ENCODE measurements at regions of chr6 and their contacts with region 1.

Region 1: DNA sequence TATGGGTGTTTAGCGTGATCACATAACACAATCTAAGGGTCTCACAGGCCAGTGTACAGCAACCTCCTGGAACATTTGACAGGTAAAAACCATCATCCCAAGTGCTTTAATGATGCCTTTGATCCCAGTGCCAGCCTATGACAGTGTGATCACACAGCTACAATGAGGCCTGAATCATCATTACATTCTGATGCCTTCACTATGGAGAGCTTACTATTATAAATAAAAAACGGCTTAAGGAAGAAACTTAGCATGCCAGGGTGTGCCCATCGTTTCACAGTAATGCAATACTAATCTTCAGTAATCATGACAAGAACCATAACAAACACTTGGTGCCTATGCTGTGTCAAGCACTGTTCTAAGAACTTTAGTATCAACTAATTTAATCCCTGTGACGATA is 11.4 kb downstream of the MAP7 start:
- DNase-seq: no peak
- ATAC-seq: no peak
- H3K4me3 ChIP-seq: no peak overlapping the region
- H3K4me3 Mint-ChIP-seq: no peak overlapping the region
- H3K27ac ChIP-seq: no peak overlapping the region
- H3K27ac Mint-ChIP-seq: no peak overlapping the region
- H3K4me1 ChIP-seq: no peaks in the 10 kb centered on the region
- H3K4me1 Mint-ChIP-seq: no peaks in the 10 kb centered on the region
- H3K27me3 ChIP-seq: peaks cover 0 to 1% of the 10 kb centered on the region in 2 experiments
- H3K27me3 Mint-ChIP-seq: peaks cover 13 to 14% of the 10 kb centered on the region in 2 donors

Region 2: DNA sequence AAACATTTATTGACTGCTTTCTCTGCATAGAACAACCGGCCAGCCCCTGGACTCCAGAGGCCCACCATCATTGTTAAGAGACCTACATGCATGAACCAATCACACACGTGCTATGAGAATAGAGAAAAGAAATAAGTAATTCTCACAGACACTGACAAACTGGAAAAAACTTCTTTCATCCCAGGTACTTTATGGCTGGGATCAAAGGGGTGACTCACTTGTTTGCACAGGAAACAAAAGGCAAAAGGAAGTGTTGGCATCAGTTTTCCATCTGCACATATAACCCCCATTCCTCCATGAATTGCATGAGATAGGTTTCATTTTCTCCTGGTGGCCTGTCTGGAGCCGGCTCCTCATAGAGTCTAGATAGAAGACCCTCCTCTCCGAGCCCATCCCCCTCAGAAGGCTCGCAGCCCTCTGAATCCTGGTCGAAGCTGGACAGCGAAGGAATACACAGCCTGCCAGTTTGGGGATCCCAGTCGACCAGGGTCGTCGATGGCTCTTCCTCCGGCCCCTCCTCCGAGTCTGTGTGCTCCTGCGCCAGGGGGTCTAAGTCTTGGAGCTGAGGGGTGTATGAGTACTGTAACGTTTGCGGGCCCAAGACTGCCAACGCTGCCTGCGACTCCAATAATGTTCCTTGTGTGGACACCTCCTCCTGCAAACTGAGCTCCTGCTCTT is 462.6 kb after region 1 on chr6:
- CTCF ChIA-PET with region 1: no interaction called
- POLR2A ChIA-PET with region 1: interaction called in 1 of 2 experiments, 16 read pairs
- DNase-seq: no peak
- ATAC-seq: no peak
- H3K4me3 ChIP-seq: no peak overlapping the region
- H3K4me3 Mint-ChIP-seq: no peak overlapping the region
- H3K27ac ChIP-seq: no peak overlapping the region
- H3K27ac Mint-ChIP-seq: no peak overlapping the region
- H3K4me1 ChIP-seq: no peaks in the 10 kb centered on the region
- H3K4me1 Mint-ChIP-seq: no peaks in the 10 kb centered on the region
- H3K27me3 ChIP-seq: peaks cover 5 to 27% of the 10 kb centered on the region in 2 experiments
- H3K27me3 Mint-ChIP-seq: peaks cover 34 to 38% of the 10 kb centered on the region in 2 donors

Region 3: GRCh38 chr6:138001750-138002349 is 1463.0 kb after region 1 on chr6:
- CTCF ChIA-PET with region 1: no interaction called
- POLR2A ChIA-PET with region 1: no interaction called
- DNase-seq: peak in 34 of 35 experiments; percentile 5 to 79 (median 52)
- ATAC-seq: peak; percentile 32 to 69 (median 52)
- H3K4me3 ChIP-seq: no peak overlapping the region
- H3K4me3 Mint-ChIP-seq: no peak overlapping the region
- H3K27ac ChIP-seq: no peak overlapping the region
- H3K27ac Mint-ChIP-seq: no peak overlapping the region
- H3K4me1 ChIP-seq: peaks cover 0 to 2% of the 10 kb centered on the region in 2 experiments
- H3K4me1 Mint-ChIP-seq: peaks cover 2 to 6% (median 5%) of the 10 kb centered on the region in 3 donors
- H3K27me3 ChIP-seq: no peaks in the 10 kb centered on the region
- H3K27me3 Mint-ChIP-seq: peaks cover 0 to 7% of the 10 kb centered on the region in 2 donors

Measured in T-cell (primary cell).